Endothelial cell of umbilical vein (primary cell): ENCODE measurements at regions of chr7 and their contacts with region 1.

Region 1: GRCh38 chr7:29408841-29409243 is 154.8 kb upstream of the PRR15 start:
- DNase-seq: peak; percentile 73
- H3K4me3 ChIP-seq: no peak overlapping the region
- H3K27ac ChIP-seq: no peak overlapping the region
- H3K4me1 ChIP-seq: no peaks in the 10 kb centered on the region
- H3K27me3 ChIP-seq: no peaks in the 10 kb centered on the region
- CTCF ChIP-seq: peak; percentile 61 to 67
- POLR2A ChIP-seq: no peak

Region 2: GRCh38 chr7:28389504-28390395 is 1019.1 kb before region 1 on chr7:
- CTCF ChIA-PET with region 1: no interaction called
- POLR2A ChIA-PET with region 1: no interaction called
- dilution Hi-C with region 1: no loop called
- intact Hi-C with region 1: loop called (anchors 5 kb)
- DNase-seq: peak; percentile 76
- H3K4me3 ChIP-seq: peak overlapping the region in 2 of 3 experiments; percentile 1 to 54
- H3K27ac ChIP-seq: no peak overlapping the region
- H3K4me1 ChIP-seq: no peaks in the 10 kb centered on the region
- H3K27me3 ChIP-seq: peaks cover 10 to 13% of the 10 kb centered on the region in 2 experiments
- CTCF ChIP-seq: peak; percentile 39 to 41
- POLR2A ChIP-seq: no peak

Region 3: DNA sequence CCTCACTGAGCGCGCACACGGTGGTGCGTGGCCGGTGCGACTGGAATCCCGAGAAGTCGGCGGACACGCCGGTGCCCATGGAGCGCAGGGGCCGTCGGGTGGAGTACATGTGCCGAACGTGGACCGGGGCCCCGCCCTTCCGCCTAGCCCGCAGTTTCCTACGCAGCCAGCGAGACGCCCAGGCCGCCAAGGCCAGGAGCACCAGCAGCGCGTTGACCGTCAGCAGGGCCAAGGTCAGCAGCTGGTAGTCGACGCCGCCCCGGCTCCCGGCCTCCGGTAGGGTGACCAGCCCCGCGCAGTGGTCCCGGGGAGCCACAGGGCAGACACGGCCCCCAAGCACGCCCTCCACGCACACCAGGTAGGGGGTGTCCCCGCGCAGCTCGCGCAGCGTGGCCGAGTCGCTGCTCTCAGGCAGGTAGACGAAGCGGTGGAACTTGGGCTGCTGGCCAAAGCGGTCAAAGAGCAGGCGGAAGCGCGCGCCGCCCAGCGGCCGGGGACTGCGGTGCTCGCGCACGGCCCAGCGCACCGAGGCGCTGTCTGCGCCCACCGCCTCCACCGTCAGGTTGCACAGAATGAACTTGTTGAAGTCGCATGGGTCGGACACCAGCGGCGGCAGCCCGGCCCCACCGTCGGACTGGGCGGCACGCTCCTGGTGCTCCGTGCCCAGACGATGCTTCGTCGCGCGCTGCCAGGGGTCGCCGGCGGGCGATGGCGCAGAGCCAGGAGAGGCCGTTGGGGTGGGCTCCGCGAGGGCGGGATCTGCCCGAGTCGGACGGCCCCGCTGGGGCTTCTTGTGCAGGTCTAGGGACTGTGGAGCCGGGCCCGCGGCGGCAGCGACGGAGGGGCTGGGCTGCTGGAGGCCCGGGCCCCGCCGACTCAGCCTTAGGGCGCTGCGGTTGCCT is 452.9 kb before region 1 on chr7:
- CTCF ChIA-PET with region 1: interaction called, 23 read pairs
- POLR2A ChIA-PET with region 1: no interaction called
- dilution Hi-C with region 1: no loop called
- intact Hi-C with region 1: loop called (anchors 1 kb)
- DNase-seq: peak; percentile 57
- H3K4me3 ChIP-seq: peak overlapping the region in 2 of 3 experiments; percentile 13 to 16
- H3K27ac ChIP-seq: no peak overlapping the region
- H3K4me1 ChIP-seq: peaks cover 11% of the 10 kb centered on the region
- H3K27me3 ChIP-seq: peaks cover 18 to 26% of the 10 kb centered on the region in 2 experiments
- CTCF ChIP-seq: peak; percentile 77 to 86
- POLR2A ChIP-seq: no peak

Region 4: DNA sequence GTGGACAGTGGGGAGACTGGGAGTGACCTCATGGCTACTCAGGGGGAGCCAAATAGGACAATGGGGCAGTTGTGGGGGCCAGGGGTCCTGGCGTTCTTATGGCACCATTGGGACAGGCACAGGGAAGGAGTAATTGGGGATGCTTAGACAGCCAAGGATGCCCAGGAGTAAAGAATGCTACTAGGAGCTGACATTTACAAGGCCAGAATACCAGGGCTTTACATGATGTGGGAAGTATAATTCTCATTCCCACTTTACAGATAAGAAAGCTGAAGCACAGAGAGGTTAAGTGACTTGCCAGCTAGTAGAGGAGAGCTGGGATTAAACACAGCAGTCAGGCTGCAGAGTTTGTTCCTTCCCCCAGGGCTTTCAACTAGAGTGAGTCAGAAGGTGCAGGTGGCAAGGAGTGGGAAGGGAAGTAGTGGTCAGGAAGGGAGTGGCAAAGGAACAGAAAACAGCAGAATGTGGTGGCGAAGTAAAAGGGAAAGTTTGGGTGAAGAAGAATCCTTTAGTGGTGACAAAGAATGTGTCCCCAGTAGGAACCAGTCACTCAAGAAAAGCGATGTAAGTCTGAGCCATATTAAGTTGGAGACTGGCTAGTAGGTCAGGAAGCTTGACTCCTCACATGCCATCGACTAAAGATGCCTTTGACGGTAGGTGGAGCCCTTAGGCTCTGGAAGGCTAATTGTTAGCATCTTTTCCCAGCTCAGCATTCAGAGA is 295.3 kb before region 1 on chr7:
- CTCF ChIA-PET with region 1: interaction called, 41 read pairs
- POLR2A ChIA-PET with region 1: no interaction called
- dilution Hi-C with region 1: no loop called
- intact Hi-C with region 1: loop called (anchors 1 kb)
- DNase-seq: peak; percentile 46
- H3K4me3 ChIP-seq: no peak overlapping the region
- H3K27ac ChIP-seq: no peak overlapping the region
- H3K4me1 ChIP-seq: peaks cover 16% of the 10 kb centered on the region
- H3K27me3 ChIP-seq: peaks cover 8 to 13% of the 10 kb centered on the region in 2 experiments
- CTCF ChIP-seq: peak; percentile 3 to 42
- POLR2A ChIP-seq: no peak

Region 5: GRCh38 chr7:29239638-29240037 is 169.2 kb before region 1 on chr7:
- CTCF ChIA-PET with region 1: interaction called, 15 read pairs
- POLR2A ChIA-PET with region 1: no interaction called
- dilution Hi-C with region 1: no loop called
- intact Hi-C with region 1: loop called (anchors 2 kb)
- DNase-seq: no peak
- H3K4me3 ChIP-seq: no peak overlapping the region
- H3K27ac ChIP-seq: no peak overlapping the region
- H3K4me1 ChIP-seq: no peaks in the 10 kb centered on the region
- H3K27me3 ChIP-seq: peaks cover 0 to 2% of the 10 kb centered on the region in 2 experiments
- CTCF ChIP-seq: peak; percentile 42 to 57
- POLR2A ChIP-seq: no peak

Region 6: GRCh38 chr7:29375641-29376562 is 32.9 kb before region 1 on chr7:
- CTCF ChIA-PET with region 1: no interaction called
- POLR2A ChIA-PET with region 1: no interaction called
- dilution Hi-C with region 1: no loop called
- intact Hi-C with region 1: no loop called
- DNase-seq: no peak
- H3K4me3 ChIP-seq: no peak overlapping the region
- H3K27ac ChIP-seq: no peak overlapping the region
- H3K4me1 ChIP-seq: no peaks in the 10 kb centered on the region
- H3K27me3 ChIP-seq: no peaks in the 10 kb centered on the region
- CTCF ChIP-seq: no peak
- POLR2A ChIP-seq: no peak

Region 7: GRCh38 chr7:29397398-29397797 is 11.4 kb before region 1 on chr7:
- CTCF ChIA-PET with region 1: interaction called, 13 read pairs
- POLR2A ChIA-PET with region 1: interaction called, 3 read pairs
- dilution Hi-C with region 1: no loop called
- intact Hi-C with region 1: no loop called
- DNase-seq: no peak
- H3K4me3 ChIP-seq: no peak overlapping the region
- H3K27ac ChIP-seq: no peak overlapping the region
- H3K4me1 ChIP-seq: no peaks in the 10 kb centered on the region
- H3K27me3 ChIP-seq: peaks cover 0 to under 1% of the 10 kb centered on the region in 2 experiments
- CTCF ChIP-seq: no peak
- POLR2A ChIP-seq: no peak